SK-N-SH (cell line): ENCODE measurements at regions of chr13 and their contacts with region 1.

Region 1: DNA sequence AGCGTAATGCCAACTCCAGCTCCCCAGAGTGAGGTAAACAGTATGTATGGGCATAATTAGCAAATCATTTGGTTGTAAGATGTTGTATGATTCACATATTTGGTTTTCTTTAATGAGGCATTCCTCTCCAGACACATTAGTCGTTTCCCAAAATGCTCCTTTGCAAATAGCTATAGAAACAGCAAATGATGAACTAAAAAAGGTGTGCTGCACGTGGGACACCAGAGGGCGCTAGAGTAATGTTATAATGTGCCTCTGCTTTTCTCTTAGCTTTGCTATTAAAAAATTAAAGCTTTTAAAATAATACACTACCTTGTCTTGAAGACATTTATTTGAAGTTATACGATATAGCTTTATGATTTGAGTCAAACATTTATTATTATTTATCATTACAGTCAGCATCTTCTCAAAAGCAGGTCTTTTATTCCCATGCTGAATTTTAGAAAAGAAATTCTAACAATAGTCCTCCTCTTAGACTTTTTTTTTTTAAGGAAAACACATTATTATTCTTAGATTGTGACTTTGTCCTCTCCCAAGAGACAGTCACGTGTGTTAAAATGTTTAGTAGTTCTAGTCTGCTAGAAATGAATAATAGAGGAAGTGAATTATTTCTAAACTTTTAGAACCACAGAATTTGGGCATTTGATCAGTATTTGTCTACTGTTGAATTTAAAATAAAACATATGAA is 121.6 kb upstream of the FRY start:
- DNase-seq: peak; percentile 18
- H3K4me3 ChIP-seq: no peak overlapping the region; a peak in 1 of 4 replicates
- H3K27ac ChIP-seq: no peak overlapping the region
- H3K4me1 ChIP-seq: peaks cover 0 to 14% of the 10 kb centered on the region in 2 experiments; a peak in 2 of 4 replicates
- H3K27me3 ChIP-seq: no peaks in the 10 kb centered on the region
- CTCF ChIP-seq: peak; percentile 96
- EP300 ChIP-seq: no peak
- RAD21 ChIP-seq: peak; percentile 91

Region 2: GRCh38 chr13:31301119-31301518 is 608.9 kb before region 1 on chr13:
- CTCF ChIA-PET with region 1: no interaction called
- POLR2A ChIA-PET with region 1: no interaction called
- DNase-seq: no peak
- H3K4me3 ChIP-seq: no peak overlapping the region
- H3K27ac ChIP-seq: no peak overlapping the region
- H3K4me1 ChIP-seq: no peaks in the 10 kb centered on the region
- H3K27me3 ChIP-seq: no peaks in the 10 kb centered on the region
- CTCF ChIP-seq: no peak
- EP300 ChIP-seq: no peak
- RAD21 ChIP-seq: no peak

Region 3: GRCh38 chr13:31468114-31468902 is 441.7 kb before region 1 on chr13:
- CTCF ChIA-PET with region 1: no interaction called
- POLR2A ChIA-PET with region 1: no interaction called
- DNase-seq: no peak
- H3K4me3 ChIP-seq: no peak overlapping the region
- H3K27ac ChIP-seq: no peak overlapping the region
- H3K4me1 ChIP-seq: no peaks in the 10 kb centered on the region
- H3K27me3 ChIP-seq: peaks cover 7% of the 10 kb centered on the region; the same call in 1 of the 2 replicates
- CTCF ChIP-seq: no peak
- EP300 ChIP-seq: no peak
- RAD21 ChIP-seq: no peak

Region 4: DNA sequence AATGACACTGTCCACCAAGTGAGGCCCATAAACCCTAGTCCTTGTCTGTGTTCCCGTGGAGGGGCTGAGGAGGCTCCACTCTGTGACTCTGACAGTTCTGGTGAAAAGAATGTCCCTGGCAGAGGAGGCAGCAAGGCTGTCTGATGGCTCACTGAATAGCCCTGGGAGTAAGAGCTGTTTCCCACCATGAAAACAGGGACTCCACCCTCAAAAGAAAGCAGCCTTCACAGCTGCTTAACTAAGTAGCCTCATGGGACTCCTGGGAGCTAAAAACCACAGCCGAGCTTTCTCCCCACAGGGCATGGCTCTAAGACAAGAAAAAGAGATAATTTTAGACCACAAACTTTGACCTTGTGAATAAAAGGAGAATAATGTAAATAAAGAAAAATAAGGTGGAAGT is 13.6 kb before region 1 on chr13:
- CTCF ChIA-PET with region 1: interaction called, 48 read pairs
- POLR2A ChIA-PET with region 1: no interaction called
- DNase-seq: no peak
- H3K4me3 ChIP-seq: no peak overlapping the region
- H3K27ac ChIP-seq: no peak overlapping the region
- H3K4me1 ChIP-seq: peaks cover 5 to 6% of the 10 kb centered on the region in 2 experiments; a peak in 3 of 4 replicates
- H3K27me3 ChIP-seq: no peaks in the 10 kb centered on the region
- CTCF ChIP-seq: no peak
- EP300 ChIP-seq: no peak
- RAD21 ChIP-seq: no peak

Region 5: DNA sequence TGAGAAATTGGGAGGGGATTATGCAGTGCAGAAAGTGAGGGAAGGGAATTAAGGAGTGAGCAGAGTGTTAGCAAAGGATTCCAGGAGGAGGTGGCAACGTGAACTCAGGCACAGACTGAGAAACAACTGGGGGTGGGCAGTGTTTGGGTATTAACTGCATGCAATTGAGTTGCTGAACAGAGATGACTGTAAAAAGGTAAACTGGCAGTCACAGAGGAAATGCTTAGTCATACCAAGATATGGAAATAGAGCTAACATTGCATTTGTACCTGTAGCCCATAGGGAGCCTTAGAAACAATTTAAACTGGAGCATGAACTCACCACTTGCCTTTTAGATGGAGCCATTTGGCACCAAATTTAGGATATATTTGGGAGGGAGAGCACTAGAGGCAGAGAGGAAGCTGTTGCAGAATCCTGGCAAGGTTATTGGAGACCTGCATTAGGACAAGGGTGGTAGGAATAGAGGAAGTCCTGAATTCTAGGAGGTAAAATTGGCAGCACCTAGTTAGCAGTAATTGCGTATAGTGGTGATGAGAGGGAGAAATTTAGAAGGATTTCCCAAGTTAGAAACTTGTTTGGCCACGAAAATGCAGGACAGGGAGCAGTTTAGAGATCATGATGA is 21.0 kb after region 1 on chr13:
- CTCF ChIA-PET with region 1: interaction called, 15 read pairs
- POLR2A ChIA-PET with region 1: no interaction called
- DNase-seq: no peak
- H3K4me3 ChIP-seq: no peak overlapping the region
- H3K27ac ChIP-seq: no peak overlapping the region
- H3K4me1 ChIP-seq: peaks cover 3 to 11% of the 10 kb centered on the region in 2 experiments; a peak in 3 of 4 replicates
- H3K27me3 ChIP-seq: no peaks in the 10 kb centered on the region
- CTCF ChIP-seq: no peak
- EP300 ChIP-seq: no peak
- RAD21 ChIP-seq: no peak

Region 6: DNA sequence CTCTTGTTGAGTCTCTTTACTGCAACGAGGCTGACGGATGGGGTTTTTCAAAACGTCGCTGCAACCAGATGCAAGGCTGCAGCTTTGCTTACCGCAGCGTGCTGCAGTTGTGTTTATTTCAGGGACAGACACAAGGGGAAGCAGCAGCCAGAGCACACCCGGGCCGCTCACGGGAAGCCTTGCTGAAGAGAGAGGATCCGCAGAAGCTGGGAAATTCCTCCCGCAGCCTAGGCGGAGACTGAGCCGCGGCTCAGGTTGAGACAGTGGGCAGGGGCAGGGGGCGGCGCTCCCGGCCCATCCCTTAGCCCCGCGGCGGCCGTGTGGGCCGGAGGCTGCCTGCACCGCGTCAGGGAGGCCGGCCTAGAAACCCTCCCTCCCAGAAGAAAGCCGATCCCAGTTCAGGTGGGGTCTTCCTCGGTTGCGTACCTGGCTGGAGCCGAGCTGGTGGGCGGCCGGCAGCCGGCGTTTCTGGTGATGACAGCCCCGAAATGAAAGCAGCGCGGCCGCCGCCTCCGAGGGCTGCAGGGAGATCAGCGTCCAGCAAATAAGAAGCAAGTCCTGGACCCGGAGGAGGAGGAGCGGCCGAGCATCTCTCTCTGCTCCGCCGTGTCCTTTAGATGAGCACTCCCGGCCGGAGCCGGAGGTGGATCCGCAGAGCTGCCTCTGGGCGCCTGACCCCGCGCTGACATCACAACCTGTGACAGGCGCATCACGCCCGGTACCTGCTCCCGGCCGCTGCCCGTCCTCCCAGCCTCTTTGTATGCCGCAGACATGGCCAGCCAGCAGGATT is 121.2 kb after region 1 on chr13 and contains the start of gene FRY:
- CTCF ChIA-PET with region 1: interaction called, 11 read pairs
- POLR2A ChIA-PET with region 1: no interaction called
- DNase-seq: peak; percentile 81
- H3K4me3 ChIP-seq: peak within 1 kb of the TSS; percentile 78 to 83
- H3K27ac ChIP-seq: peak within 1 kb of the TSS; percentile 50 to 85; a peak in 3 of 4 replicates
- H3K4me1 ChIP-seq: peaks cover 0 to 6% of the 10 kb centered on the region in 2 experiments; a peak in 2 of 4 replicates
- H3K27me3 ChIP-seq: no peaks in the 10 kb centered on the region
- CTCF ChIP-seq: no peak
- EP300 ChIP-seq: no peak
- RAD21 ChIP-seq: peak; percentile 46
- polyA plus RNA-seq, gene FRY: 1.4 and 2.1 TPM in 2 replicates

Region 7: GRCh38 chr13:32164622-32165268 is 254.7 kb after region 1 on chr13:
- CTCF ChIA-PET with region 1: interaction called, 13 read pairs
- POLR2A ChIA-PET with region 1: no interaction called
- DNase-seq: peak; percentile 46
- H3K4me3 ChIP-seq: no peak overlapping the region; a peak in 1 of 4 replicates
- H3K27ac ChIP-seq: no peak overlapping the region; a peak in 1 of 4 replicates
- H3K4me1 ChIP-seq: peaks cover 0 to 7% of the 10 kb centered on the region in 2 experiments; a peak in 2 of 4 replicates
- H3K27me3 ChIP-seq: no peaks in the 10 kb centered on the region
- CTCF ChIP-seq: peak; percentile 76
- EP300 ChIP-seq: no peak
- RAD21 ChIP-seq: peak; percentile 60

Region 8: GRCh38 chr13:32315238-32316027 is 405.4 kb after region 1 on chr13 and contains the starts of genes BRCA2 and ZAR1L:
- CTCF ChIA-PET with region 1: interaction called, 17 read pairs
- POLR2A ChIA-PET with region 1: no interaction called
- DNase-seq: peak; percentile 90
- H3K4me3 ChIP-seq: peak within 1 kb of the TSS; percentile 90 to 97
- H3K27ac ChIP-seq: peak within 1 kb of the TSS; percentile 89 to 90
- H3K4me1 ChIP-seq: peaks cover 0 to 6% of the 10 kb centered on the region in 2 experiments; a peak in 2 of 4 replicates
- H3K27me3 ChIP-seq: no peaks in the 10 kb centered on the region
- CTCF ChIP-seq: no peak
- EP300 ChIP-seq: no peak
- RAD21 ChIP-seq: no peak
- polyA plus RNA-seq, gene BRCA2: 0.81 and 1.6 TPM in 2 replicates
- polyA plus RNA-seq, gene ZAR1L: 0.07 TPM in 1 of 2 replicates, not detected in the other

Region 9: DNA sequence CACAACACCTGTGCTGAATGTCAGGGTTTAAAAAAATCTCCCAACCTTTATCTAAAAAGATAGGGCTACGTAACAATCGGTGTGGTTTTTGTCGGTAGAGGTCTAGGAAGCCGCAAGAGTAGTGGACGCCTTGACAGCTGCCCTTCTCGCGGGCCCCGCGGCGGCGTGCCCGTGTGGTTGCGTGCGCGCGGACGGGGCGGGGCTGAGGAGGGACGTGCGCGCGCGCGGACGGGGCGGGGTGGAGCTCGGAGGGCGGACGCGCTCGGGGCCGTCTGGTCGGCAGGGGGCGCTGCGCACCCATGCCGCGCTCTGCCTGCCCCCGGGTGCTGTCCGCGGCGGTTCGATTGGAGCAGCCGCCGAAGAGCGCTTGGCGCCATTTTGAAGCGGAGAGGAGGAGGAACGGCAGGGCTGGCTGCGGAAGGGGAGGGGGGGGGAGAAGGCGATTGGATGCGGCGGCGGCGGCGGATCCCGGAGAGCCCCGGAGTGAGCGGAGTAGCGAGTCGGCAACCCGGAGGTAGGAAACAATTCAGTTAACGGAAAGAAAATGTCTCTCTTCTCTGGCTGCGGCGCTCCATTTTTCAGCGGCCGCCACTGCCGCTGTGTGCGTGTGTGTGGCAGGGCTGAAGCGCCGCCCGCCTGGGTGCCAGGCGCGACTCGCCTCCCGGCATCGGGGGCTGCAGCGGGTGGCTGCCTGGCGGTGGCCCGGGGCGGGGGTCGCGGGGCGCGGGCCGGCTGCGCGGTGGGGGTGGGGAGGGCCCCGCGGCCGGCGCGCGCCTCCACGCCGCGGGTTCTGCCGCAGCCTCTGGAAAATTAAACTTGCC is 676.3 kb after region 1 on chr13 and contains the start of gene PDS5B:
- CTCF ChIA-PET with region 1: interaction called, 46 read pairs
- POLR2A ChIA-PET with region 1: no interaction called
- DNase-seq: peak; percentile 98
- H3K4me3 ChIP-seq: peak within 1 kb of the TSS; percentile 88 to 91
- H3K27ac ChIP-seq: peak within 1 kb of the TSS; percentile 90 to 97
- H3K4me1 ChIP-seq: peaks cover 15 to 26% of the 10 kb centered on the region in 2 experiments; a peak in 3 of 4 replicates
- H3K27me3 ChIP-seq: no peaks in the 10 kb centered on the region
- CTCF ChIP-seq: peak; percentile 74
- EP300 ChIP-seq: peak in 1 of 2 experiments; percentile 34; a peak in 1 of 4 replicates
- RAD21 ChIP-seq: peak; percentile 88
- polyA plus RNA-seq, gene PDS5B: 3.7 and 3.8 TPM in 2 replicates